T-cell (primary cell): ENCODE measurements at regions of chr14 and their contacts with region 1.

Region 1: GRCh38 chr14:73924337-73924736 is 25.6 kb downstream of the FAM161B start:
- DNase-seq: no peak
- ATAC-seq: no peak
- H3K4me3 ChIP-seq: no peak overlapping the region
- H3K4me3 Mint-ChIP-seq: no peak overlapping the region
- H3K27ac ChIP-seq: no peak overlapping the region
- H3K27ac Mint-ChIP-seq: no peak overlapping the region
- H3K4me1 ChIP-seq: no peaks in the 10 kb centered on the region
- H3K4me1 Mint-ChIP-seq: peaks cover 0 to 3% (median 0%) of the 10 kb centered on the region in 3 donors
- H3K27me3 ChIP-seq: no peaks in the 10 kb centered on the region
- H3K27me3 Mint-ChIP-seq: no peaks in the 10 kb centered on the region

Region 2: GRCh38 chr14:73602984-73603383 is 321.4 kb before region 1 on chr14:
- CTCF ChIA-PET with region 1: no interaction called
- POLR2A ChIA-PET with region 1: interaction called in 1 of 2 experiments, 10 read pairs
- DNase-seq: no peak
- ATAC-seq: no peak
- H3K4me3 ChIP-seq: no peak overlapping the region
- H3K4me3 Mint-ChIP-seq: no peak overlapping the region
- H3K27ac ChIP-seq: no peak overlapping the region
- H3K27ac Mint-ChIP-seq: no peak overlapping the region
- H3K4me1 ChIP-seq: no peaks in the 10 kb centered on the region
- H3K4me1 Mint-ChIP-seq: no peaks in the 10 kb centered on the region
- H3K27me3 ChIP-seq: peaks cover 0 to 3% of the 10 kb centered on the region in 2 experiments
- H3K27me3 Mint-ChIP-seq: peaks cover 0 to 4% of the 10 kb centered on the region in 2 donors

Region 3: GRCh38 chr14:73870525-73871235 is 53.7 kb before region 1 on chr14:
- CTCF ChIA-PET with region 1: no interaction called
- POLR2A ChIA-PET with region 1: no interaction called
- DNase-seq: no peak
- ATAC-seq: no peak
- H3K4me3 ChIP-seq: no peak overlapping the region
- H3K4me3 Mint-ChIP-seq: no peak overlapping the region
- H3K27ac ChIP-seq: no peak overlapping the region
- H3K27ac Mint-ChIP-seq: no peak overlapping the region
- H3K4me1 ChIP-seq: no peaks in the 10 kb centered on the region
- H3K4me1 Mint-ChIP-seq: no peaks in the 10 kb centered on the region
- H3K27me3 ChIP-seq: no peaks in the 10 kb centered on the region
- H3K27me3 Mint-ChIP-seq: no peaks in the 10 kb centered on the region

Region 4: GRCh38 chr14:74414403-74415114 is 490.2 kb after region 1 on chr14:
- CTCF ChIA-PET with region 1: no interaction called
- POLR2A ChIA-PET with region 1: interaction called in 1 of 2 experiments, 10 read pairs
- DNase-seq: no peak
- ATAC-seq: no peak
- H3K4me3 ChIP-seq: no peak overlapping the region
- H3K4me3 Mint-ChIP-seq: no peak overlapping the region
- H3K27ac ChIP-seq: no peak overlapping the region
- H3K27ac Mint-ChIP-seq: no peak overlapping the region
- H3K4me1 ChIP-seq: no peaks in the 10 kb centered on the region
- H3K4me1 Mint-ChIP-seq: no peaks in the 10 kb centered on the region
- H3K27me3 ChIP-seq: peaks cover 6 to 41% of the 10 kb centered on the region in 2 experiments
- H3K27me3 Mint-ChIP-seq: peaks cover 18 to 27% of the 10 kb centered on the region in 2 donors